A549 (cell line): ENCODE measurements at regions of chr16 and their contacts with region 1.

Region 1: GRCh38 chr16:660459-661183 is 7.3 kb upstream of the RHOT2 start:
- DNase-seq: peak; percentile 70 to 94
- ATAC-seq: peak; percentile 78 to 90
- H3K4me3 ChIP-seq: no peak overlapping the region
- H3K27ac ChIP-seq: peak overlapping the region; percentile 71 to 87; a peak in 5 of 6 replicates
- H3K4me1 ChIP-seq: peaks cover 14% of the 10 kb centered on the region
- CTCF ChIP-seq: peak; percentile 48
- EP300 ChIP-seq: no peak
- POLR2A ChIP-seq: no peak
- RAD21 ChIP-seq: peak; percentile 40 to 54; a peak in 4 of 5 replicates

Region 2: DNA sequence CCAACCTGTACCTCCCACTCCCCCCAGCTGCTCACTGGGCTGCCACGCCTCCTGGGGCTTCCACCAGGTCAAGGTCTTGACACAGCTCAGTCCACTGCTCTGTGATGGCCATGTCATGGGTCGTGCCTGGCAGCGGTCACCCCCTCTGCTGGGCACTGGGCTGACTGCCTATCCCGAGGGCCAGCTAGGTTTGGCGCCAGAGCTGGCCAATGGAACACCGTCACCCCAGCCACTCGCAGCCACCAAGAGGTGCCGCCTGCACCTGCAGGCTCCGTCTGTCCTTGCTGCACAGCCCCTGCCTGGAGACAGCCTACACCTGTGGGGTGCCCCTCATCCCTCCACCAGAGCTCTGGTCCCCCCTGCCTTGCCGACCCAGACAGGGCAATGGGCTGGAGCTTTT is 75.3 kb before region 1 on chr16:
- CTCF ChIA-PET with region 1: interaction called, 105 read pairs
- POLR2A ChIA-PET with region 1: interaction called, 3 read pairs
- DNase-seq: peak in 1 of 2 experiments; percentile 55
- ATAC-seq: peak; percentile 1; a peak in 1 of 6 replicates
- H3K4me3 ChIP-seq: no peak overlapping the region
- H3K27ac ChIP-seq: no peak overlapping the region
- H3K4me1 ChIP-seq: peaks cover 21% of the 10 kb centered on the region
- CTCF ChIP-seq: no peak
- EP300 ChIP-seq: no peak
- POLR2A ChIP-seq: no peak; the same call in 1 of the 2 replicates
- RAD21 ChIP-seq: no peak

Region 3: DNA sequence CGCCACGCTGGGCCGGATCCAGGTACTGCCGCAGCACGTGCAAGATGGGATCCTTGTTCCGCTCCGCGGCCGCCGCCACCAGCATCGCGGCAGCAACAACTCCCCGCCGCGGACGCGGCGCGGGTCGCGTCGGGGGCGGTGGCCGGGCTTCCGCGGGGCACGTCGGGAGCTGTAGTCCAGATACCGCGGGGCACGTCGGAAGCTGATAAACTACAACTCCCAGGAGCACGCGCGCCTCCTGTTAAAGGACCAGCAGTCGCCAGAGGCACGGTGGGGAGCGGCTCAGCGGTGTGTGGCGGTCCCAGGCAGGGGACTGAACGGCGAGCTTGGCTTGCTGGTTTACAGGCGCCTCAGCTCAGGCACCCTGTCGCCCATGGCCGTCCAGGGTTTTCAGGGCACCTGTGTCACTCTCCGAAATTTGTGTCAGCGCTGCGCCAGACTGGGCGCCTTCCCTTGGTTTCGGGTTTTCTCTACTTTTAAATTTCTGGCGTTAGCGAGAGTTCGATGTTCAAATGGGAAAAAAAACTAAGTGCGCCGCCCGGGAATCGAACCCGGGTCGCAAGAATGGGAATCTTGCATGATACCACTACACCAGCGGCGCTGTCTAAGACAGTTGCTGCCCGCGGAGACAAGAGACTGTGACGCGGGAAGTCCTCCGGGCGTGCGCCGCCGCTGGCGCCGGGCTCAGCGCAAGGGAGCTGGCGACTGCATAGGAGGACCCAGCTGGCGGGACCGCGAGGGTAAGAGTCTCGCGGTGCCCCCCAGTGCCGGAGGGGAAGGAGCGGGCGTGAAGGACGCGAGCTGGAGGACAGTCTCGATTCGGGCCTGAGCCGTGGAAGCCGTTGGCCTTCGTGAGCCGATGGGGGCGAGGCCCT is 24.2 kb before region 1 on chr16 and contains the start of gene METTL26:
- CTCF ChIA-PET with region 1: interaction called, 12 read pairs
- POLR2A ChIA-PET with region 1: no interaction called
- DNase-seq: peak; percentile 92 to 96
- ATAC-seq: peak; percentile 81 to 92
- H3K4me3 ChIP-seq: peak within 1 kb of the TSS; percentile 78
- H3K27ac ChIP-seq: peak within 1 kb of the TSS; percentile 83 to 91
- H3K4me1 ChIP-seq: peaks cover 25% of the 10 kb centered on the region
- CTCF ChIP-seq: no peak
- EP300 ChIP-seq: 0 out of 5 replicates have a peak, but pooled peaks of 1 of the 2 experiments have one; percentile 13
- POLR2A ChIP-seq: peak; percentile 94
- RAD21 ChIP-seq: peak in 1 of 2 experiments; percentile 26; a peak in 2 of 5 replicates
- polyA plus RNA-seq, gene METTL26: 44.2 and 47.2 TPM in 2 replicates

Region 4: GRCh38 chr16:648781-649589 is 11.6 kb before region 1 on chr16 and contains the start of gene WDR90:
- CTCF ChIA-PET with region 1: interaction called, 64 read pairs
- POLR2A ChIA-PET with region 1: no interaction called
- DNase-seq: peak; percentile 94
- ATAC-seq: peak; percentile 70 to 85
- H3K4me3 ChIP-seq: peak within 1 kb of the TSS; percentile 79
- H3K27ac ChIP-seq: peak within 1 kb of the TSS; percentile 90 to 99
- H3K4me1 ChIP-seq: peaks cover 43% of the 10 kb centered on the region
- CTCF ChIP-seq: no peak
- EP300 ChIP-seq: no peak
- POLR2A ChIP-seq: peak; percentile 57
- RAD21 ChIP-seq: no peak
- polyA plus RNA-seq, gene WDR90: 6.5 and 7.3 TPM in 2 replicates

Region 5: GRCh38 chr16:684067-684794 is 23.6 kb after region 1 on chr16 and contains the start of gene JMJD8:
- CTCF ChIA-PET with region 1: interaction called, 32 read pairs
- POLR2A ChIA-PET with region 1: no interaction called
- DNase-seq: peak; percentile 90 to 97
- ATAC-seq: peak; percentile 61 to 77
- H3K4me3 ChIP-seq: peak within 1 kb of the TSS; percentile 76
- H3K27ac ChIP-seq: peak within 1 kb of the TSS; percentile 91 to 93
- H3K4me1 ChIP-seq: peaks cover 34% of the 10 kb centered on the region
- CTCF ChIP-seq: no peak
- EP300 ChIP-seq: no peak
- POLR2A ChIP-seq: peak; percentile 88
- RAD21 ChIP-seq: no peak
- polyA plus RNA-seq, gene JMJD8: 37.5 and 43.8 TPM in 2 replicates